Transverse colon (tissue), 4 donors: ENCODE measurements at regions of chr13 and their contacts with region 1.

Region 1: DNA sequence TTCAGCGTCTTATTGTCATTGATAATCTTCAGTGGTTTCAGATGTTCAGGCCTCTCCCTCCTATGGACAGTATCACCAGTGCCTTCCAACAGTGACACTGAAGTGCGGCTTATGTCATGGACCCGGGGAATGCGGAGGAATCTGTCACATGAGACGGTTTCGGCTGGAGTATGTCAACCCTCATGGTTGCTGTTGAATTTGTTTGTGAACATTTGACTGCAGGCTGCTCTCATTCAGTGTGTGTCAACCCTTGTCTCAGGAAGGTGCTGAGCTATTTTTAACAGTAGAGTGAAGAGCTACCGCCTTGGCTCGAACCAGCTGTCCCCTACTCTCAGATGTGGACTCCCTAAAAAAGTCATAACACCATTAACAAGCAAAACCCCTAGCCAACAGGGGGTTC is 138.8 kb upstream of the RNF113B start:
- DNase-seq: no peak
- H3K4me3 ChIP-seq: no peak overlapping the region
- H3K27ac ChIP-seq: no peak overlapping the region
- H3K4me1 ChIP-seq: peaks cover 4 to 24% (median 21%) of the 10 kb centered on the region in 4 donors
- H3K27me3 ChIP-seq: no peaks in the 10 kb centered on the region
- CTCF ChIP-seq: no peak
- EP300 ChIP-seq: no peak
- POLR2A ChIP-seq: no peak

Region 2: GRCh38 chr13:98290261-98290660 is 25.6 kb before region 1 on chr13:
- in situ Hi-C with region 1: no loop called
- intact Hi-C with region 1: loop called (anchors 1 kb)
- DNase-seq: no peak
- H3K4me3 ChIP-seq: no peak overlapping the region
- H3K27ac ChIP-seq: no peak overlapping the region
- H3K4me1 ChIP-seq: peaks cover 0 to 2% (median 0%) of the 10 kb centered on the region in 4 donors
- H3K27me3 ChIP-seq: no peaks in the 10 kb centered on the region
- CTCF ChIP-seq: no peak
- EP300 ChIP-seq: no peak
- POLR2A ChIP-seq: no peak

Region 3: DNA sequence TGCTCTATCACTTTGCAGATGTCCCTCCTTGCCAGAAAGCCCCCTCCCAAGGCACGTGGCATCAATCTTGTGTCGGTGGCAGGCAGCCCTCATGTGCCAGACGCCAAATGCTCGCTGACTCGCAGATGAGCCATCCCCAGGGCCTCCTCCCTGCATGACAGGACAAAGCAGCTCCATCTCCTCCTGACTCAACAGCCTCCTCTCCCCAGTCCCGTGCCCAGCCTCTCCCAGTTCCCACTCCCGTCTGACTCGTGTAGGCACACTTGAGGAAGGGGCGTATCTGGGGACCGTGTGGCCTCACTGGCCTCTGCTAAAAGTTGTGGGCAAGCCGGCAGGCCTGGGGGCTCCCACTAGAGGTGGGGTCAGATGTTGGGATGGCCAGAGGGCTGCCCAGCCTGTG is 127.4 kb after region 1 on chr13:
- in situ Hi-C with region 1: no loop called
- intact Hi-C with region 1: no loop called
- DNase-seq: no peak
- H3K4me3 ChIP-seq: no peak overlapping the region
- H3K27ac ChIP-seq: no peak overlapping the region
- H3K4me1 ChIP-seq: peaks cover 0 to 7% (median 1%) of the 10 kb centered on the region in 4 donors
- H3K27me3 ChIP-seq: no peaks in the 10 kb centered on the region
- CTCF ChIP-seq: no peak
- EP300 ChIP-seq: no peak
- POLR2A ChIP-seq: no peak